ENCODE measurements at regions of chr10 and their contacts with region 1.

Region 1: DNA sequence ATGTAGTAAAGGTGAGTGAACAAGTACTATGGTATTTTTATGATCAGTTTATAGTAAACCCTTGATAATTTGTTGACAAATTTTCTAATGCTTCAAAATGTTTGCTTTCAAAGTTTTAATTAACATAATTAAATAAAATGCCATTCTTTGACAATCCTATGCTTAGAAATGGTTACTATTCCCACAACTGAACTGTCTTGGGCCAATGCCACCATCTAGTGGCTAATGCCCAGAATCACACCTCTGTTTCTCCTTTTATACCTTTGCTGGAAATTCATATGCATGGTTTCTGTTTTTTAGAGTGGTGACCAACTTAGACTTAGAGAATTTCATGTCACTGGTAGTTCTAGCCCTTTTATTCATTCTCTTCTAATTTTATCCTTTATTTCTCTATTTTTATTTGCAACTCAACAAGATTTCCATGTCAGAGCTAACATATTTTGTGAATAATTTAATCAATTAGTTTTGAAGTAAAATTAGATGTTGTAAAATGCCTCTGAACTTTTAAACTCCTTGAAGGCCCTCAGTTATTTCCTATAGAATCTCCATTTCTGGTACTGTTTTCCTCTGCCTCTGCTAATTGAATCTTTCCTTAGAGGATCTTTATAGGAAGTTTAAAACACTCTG is 31.1 kb downstream of the PCGF5 start:
- DNase-seq: no peak
- H3K4me3 ChIP-seq: no peak overlapping the region
- H3K27ac ChIP-seq: no peak overlapping the region
- H3K4me1 ChIP-seq: peaks cover 0 to 13% (median 4%) of the 10 kb centered on the region in 4 donors
- H3K27me3 ChIP-seq: no peaks in the 10 kb centered on the region
- CTCF ChIP-seq: peak; percentile 86 to 92 (median 90)
- EP300 ChIP-seq: no peak
- POLR2A ChIP-seq: no peak

Region 2: DNA sequence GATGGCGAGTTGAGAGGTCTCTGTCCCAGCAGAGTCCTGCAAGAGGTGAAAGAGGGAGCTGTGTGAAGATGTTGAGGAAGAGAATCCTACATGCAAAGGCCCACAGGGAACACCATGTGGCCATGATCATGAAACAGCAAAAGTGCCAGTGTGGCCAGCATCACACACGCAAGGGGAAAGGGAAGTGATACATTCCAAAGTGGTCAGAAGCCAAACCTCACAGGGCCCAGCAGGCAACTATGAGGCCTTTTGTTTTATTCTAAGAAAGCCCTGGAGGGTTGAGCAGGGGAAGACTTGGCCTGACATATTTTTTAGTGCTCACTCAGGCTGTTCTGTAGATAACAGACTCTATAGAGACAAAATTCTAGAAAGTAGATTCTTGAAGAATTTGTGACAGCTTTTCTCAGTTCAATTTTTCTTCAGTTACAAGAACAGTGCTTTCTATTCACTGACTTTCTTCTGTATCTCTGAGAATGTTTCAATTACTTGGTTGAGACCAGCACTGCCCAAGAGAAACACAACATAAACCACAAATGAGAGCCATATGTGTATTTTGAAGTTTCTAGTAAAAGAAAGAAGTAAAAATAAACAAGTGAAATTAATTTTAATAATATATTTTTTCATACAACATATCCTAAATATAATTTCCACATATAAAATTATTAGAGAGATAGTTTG is 476.1 kb before region 1 on chr10:
- intact Hi-C with region 1: no loop called
- DNase-seq: no peak
- H3K4me3 ChIP-seq: no peak overlapping the region
- H3K27ac ChIP-seq: no peak overlapping the region
- H3K4me1 ChIP-seq: no peaks in the 10 kb centered on the region
- H3K27me3 ChIP-seq: peaks cover 0 to 3% (median 0%) of the 10 kb centered on the region in 4 donors
- CTCF ChIP-seq: no peak
- EP300 ChIP-seq: no peak
- POLR2A ChIP-seq: no peak

Region 3: GRCh38 chr10:90912174-90912573 is 339.4 kb before region 1 on chr10:
- intact Hi-C with region 1: loop called (anchors 2 kb)
- DNase-seq: no peak
- H3K4me3 ChIP-seq: no peak overlapping the region
- H3K27ac ChIP-seq: no peak overlapping the region
- H3K4me1 ChIP-seq: peaks cover 0 to 6% (median 5%) of the 10 kb centered on the region in 4 donors
- H3K27me3 ChIP-seq: peaks cover 0 to 10% (median 0%) of the 10 kb centered on the region in 4 donors
- CTCF ChIP-seq: no peak
- EP300 ChIP-seq: no peak
- POLR2A ChIP-seq: no peak

Region 4: DNA sequence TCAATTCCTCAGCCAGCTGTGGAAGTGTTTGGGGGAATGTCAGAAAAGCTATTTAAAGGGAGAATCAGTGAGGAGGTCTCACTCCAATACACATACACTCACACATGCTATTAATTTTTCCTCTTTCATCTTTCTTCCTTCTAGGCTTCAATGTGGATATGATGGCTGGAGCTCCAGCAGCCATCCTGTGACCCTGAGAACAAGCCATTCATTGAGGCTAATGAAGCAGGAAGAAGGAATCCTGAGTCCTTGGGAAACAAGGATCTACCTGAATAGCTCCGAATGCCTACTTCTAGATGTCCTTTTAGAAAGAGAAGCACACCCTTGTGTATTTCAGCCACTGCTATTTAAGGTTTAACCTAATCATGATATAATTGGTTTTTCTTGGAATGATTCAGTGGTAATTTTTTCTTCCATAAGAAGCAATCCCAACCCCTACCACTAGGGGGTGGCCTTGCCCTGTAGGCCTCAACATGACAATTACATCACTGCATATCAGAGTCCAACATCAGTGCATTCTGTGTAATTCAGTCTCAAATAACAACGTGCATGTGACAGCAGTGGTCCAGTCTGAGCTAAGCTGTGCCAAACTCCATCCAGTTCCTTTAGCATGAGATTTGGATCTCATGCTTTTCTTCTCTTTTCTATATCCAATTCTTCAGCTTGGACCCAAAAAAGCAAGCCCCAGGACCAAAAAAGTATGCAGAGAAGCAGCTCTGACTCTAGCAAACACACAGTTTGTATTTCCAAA is 245.4 kb before region 1 on chr10:
- intact Hi-C with region 1: loop called (anchors 2 kb)
- DNase-seq: no peak
- H3K4me3 ChIP-seq: no peak overlapping the region
- H3K27ac ChIP-seq: peak overlapping the region in 2 of 4 donors; percentile 20 to 41
- H3K4me1 ChIP-seq: peaks cover 0 to 8% (median 0%) of the 10 kb centered on the region in 4 donors
- H3K27me3 ChIP-seq: no peaks in the 10 kb centered on the region
- CTCF ChIP-seq: peak; percentile 76 to 94 (median 88)
- EP300 ChIP-seq: no peak
- POLR2A ChIP-seq: no peak

Region 5: DNA sequence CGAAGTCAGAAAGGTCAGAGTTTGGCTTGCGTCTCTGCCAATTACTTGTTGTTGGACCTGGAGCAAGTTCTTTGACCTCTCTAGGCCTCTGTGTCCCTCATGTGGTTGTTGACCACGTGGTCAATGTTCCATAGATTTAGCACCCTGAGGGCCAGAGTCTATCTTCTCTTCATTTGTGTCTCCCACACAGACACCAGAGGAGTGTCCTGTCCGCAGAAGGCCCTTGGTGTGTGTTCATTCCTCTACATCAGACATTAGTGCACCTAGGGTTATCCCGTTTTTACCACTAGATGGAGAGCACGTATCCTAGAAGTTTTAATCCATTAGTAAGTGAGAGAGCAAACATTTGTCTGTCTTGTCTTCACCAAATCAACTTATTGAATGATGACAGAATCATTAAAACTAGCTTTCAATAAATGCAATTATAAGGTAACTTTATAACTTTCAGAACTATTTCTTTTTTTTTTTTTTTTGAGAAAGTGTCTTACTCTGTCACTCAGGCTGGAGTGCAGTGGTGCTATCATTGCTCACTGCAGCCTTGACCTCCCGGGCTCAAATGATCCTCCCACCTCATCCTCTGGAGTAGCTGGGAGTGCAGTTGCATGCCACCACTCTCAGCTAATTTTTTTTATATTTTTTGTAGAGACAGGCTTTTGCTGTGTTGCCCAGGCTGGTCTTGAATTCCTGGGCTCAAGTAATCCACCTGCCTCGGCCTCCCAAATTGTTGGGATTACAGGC is 208.2 kb before region 1 on chr10:
- intact Hi-C with region 1: loop called (anchors 2 kb)
- DNase-seq: no peak
- H3K4me3 ChIP-seq: no peak overlapping the region
- H3K27ac ChIP-seq: no peak overlapping the region
- H3K4me1 ChIP-seq: peaks cover 0 to 14% (median 10%) of the 10 kb centered on the region in 4 donors
- H3K27me3 ChIP-seq: no peaks in the 10 kb centered on the region
- CTCF ChIP-seq: peak; percentile 39 to 53 (median 50)
- EP300 ChIP-seq: no peak
- POLR2A ChIP-seq: no peak

Region 6: GRCh38 chr10:91088300-91089140 is 163.0 kb before region 1 on chr10:
- intact Hi-C with region 1: loop called (anchors 2 kb)
- DNase-seq: peak; percentile 72
- H3K4me3 ChIP-seq: no peak overlapping the region
- H3K27ac ChIP-seq: peak overlapping the region; percentile 0 to 47 (median 30)
- H3K4me1 ChIP-seq: peaks cover 9 to 33% (median 27%) of the 10 kb centered on the region in 4 donors
- H3K27me3 ChIP-seq: no peaks in the 10 kb centered on the region
- CTCF ChIP-seq: peak in 1 of 3 experiments; percentile 6
- EP300 ChIP-seq: no peak
- POLR2A ChIP-seq: no peak

Region 7: DNA sequence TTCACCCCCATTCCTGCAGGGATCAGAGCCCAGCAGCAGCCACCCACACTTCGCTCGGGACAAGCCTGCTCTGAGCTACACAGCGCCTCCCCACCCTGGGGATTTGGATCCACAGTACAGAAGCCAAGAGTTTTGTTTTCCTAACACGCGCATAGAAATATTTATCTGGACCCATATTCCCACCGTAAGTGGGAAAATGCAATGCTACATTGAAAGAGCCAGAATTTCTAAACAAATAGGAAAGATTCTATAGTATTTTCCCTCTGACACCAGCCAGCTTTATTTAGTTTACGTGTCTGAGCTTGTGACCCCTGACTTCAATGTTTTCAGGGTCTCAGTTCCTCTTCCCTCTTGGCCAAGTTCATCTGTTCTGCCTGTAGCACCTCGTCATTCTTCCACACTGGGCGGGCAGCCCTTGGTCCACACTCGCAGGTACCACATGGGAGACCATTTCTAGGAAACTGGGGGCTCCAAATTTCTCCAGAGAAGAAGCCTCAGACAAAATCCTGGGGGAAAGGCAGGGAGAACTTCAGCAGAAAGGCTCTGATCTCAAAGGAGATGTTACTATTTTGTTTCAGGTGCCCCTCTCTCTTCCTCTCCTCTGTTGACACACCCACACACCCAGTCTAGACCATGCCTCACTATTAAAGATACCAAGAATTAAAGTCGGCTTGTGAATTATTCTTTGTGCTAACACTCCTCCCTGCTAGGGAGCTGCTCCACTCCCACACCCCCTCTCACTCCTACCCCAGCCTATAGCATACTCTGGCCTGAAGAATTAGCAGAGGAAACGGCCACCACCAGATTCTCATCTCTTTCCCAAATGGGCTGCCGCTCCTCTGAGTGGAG is 147.1 kb before region 1 on chr10:
- intact Hi-C with region 1: no loop called
- DNase-seq: no peak
- H3K4me3 ChIP-seq: no peak overlapping the region
- H3K27ac ChIP-seq: no peak overlapping the region
- H3K4me1 ChIP-seq: peaks cover 0 to 4% (median 0%) of the 10 kb centered on the region in 4 donors
- H3K27me3 ChIP-seq: no peaks in the 10 kb centered on the region
- CTCF ChIP-seq: no peak
- EP300 ChIP-seq: no peak
- POLR2A ChIP-seq: no peak